ENCODE measurements at regions of chr9 and their contacts with region 1.

Region 1: DNA sequence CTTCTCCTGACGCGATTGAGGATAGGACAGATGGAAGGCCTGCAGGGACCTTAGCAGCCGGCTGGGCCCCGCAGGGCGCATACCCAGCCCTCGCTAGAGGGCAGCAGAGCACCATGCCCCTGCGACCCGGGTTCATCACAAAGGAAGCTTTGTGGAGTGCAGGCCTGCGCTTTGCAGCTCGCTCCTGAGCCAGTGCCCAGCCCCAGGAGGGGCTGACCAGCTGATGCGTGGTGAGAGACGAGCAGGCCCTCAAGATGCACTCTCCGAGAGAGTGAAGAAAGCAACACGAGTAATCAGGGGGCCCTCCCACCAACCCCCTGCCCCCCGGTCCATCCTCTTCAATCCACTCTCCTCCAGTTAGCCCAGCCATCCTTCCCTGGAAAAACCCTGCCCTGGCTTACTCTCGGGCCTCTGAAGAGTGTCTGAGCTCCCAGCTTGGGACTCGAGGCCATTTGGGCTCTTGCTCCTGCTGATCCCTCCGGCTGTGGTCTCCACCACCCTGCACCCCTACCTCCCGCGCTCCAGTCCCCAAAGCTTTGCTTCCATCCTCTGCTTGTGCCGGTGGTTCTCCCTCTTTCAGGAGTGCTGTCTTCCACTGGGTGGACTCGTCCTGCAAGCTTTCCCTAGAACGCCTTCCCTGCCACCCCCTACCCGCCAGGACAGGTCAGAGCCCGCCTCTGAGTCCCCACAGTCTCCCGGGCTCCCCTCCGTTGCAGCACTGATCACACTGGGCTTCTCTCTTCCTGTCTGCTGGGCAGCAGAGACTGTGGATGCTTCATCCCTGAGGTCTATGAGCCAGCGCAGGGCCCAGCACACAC is 9.1 kb upstream of the KIF12 start:
- DNase-seq: peak; percentile 79
- CTCF ChIP-seq: peak; percentile 88

Region 2: DNA sequence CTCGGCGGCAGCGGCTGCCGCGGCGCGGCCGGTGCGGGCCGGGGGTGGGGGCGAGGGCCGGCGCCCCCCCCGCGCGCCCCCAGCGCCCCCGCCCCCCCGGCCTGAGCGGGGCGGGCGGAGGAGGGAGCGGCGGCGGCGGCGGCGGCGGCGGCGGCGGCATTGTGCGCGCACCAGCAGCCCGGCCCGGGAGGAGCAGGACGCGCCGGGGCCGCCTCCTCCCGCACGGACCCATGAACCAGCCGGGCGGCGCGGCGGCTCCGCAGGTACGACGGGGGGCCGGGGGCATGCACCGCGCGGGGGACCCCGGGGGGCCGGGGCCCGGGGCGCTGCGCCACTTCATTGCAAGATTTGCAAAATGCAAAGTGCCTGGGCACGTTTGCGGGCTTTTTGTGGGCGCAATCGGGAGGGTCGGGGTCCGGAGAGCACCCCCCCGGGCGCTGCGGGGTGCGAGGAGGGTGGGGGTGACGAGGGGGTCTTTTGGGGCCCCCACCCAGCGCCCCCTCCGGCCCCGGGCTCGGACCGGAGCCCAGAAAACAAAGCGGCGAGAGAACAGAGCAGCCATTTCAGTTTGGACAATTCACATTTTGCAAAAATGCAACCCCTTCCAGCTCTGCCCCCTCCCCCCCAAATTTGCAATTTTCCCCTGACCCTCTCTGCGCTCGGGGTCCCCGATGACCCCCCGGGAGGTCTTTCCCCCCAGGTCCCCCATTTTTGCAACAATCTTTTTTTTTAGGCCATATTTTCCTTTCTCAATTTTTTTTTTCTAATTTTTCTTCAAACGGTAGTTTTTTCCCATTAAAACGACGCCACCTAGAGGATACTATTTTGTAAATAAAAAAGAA is 231.9 kb before region 1 on chr9 and contains the start of gene ZNF618:
- in situ Hi-C with region 1: no loop called
- DNase-seq: peak; percentile 74
- CTCF ChIP-seq: peak; percentile 8

Region 3: GRCh38 chr9:114291064-114291474 is 182.8 kb after region 1 on chr9:
- in situ Hi-C with region 1: loop called (anchors 25 kb)
- DNase-seq: peak; percentile 76
- CTCF ChIP-seq: peak; percentile 90